ENCODE measurements at regions of chr4 and their contacts with region 1.

Region 1: GRCh38 chr4:40629401-40630334 is at the start of gene RBM47:
- DNase-seq: peak; percentile 29
- ATAC-seq: peak; percentile 65
- H3K4me3 Mint-ChIP-seq: peak within 1 kb of the TSS; percentile 93
- H3K27ac Mint-ChIP-seq: peak within 1 kb of the TSS; percentile 84
- H3K4me1 Mint-ChIP-seq: peaks cover 22% of the 10 kb centered on the region
- H3K27me3 Mint-ChIP-seq: peaks cover 5% of the 10 kb centered on the region
- CTCF ChIP-seq: no peak
- total RNA-seq, gene RBM47: 6.3 and 8.0 TPM in 2 replicates

Region 2: DNA sequence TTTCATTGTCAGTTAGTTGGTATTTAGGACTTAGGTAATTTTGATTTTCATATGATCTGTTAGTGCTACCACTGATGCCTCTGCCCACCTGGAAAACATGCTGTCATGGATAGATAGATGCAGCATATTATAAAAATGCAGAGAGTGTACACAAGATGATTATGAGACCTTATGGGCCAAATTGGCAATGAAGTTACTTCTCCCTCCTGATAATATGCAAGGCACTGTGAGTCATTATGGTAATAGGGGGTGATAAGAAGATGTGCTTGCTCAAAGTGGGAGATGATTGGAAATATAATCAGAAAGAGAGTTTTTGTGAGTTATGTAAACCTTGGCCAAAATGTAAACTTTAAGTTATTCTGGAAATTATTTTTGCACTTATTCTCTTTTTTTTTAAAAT is 489.5 kb before region 1 on chr4:
- CTCF ChIA-PET with region 1: no interaction called
- POLR2A ChIA-PET with region 1: no interaction called
- intact Hi-C with region 1: no loop called
- DNase-seq: no peak
- ATAC-seq: no peak
- H3K4me3 Mint-ChIP-seq: no peak overlapping the region
- H3K27ac Mint-ChIP-seq: no peak overlapping the region
- H3K4me1 Mint-ChIP-seq: no peaks in the 10 kb centered on the region
- H3K27me3 Mint-ChIP-seq: no peaks in the 10 kb centered on the region
- CTCF ChIP-seq: no peak

Region 3: GRCh38 chr4:40462326-40462725 is 167.3 kb before region 1 on chr4:
- CTCF ChIA-PET with region 1: no interaction called
- POLR2A ChIA-PET with region 1: no interaction called
- intact Hi-C with region 1: loop called (anchors 5 kb)
- DNase-seq: no peak
- ATAC-seq: peak; percentile 95
- H3K4me3 Mint-ChIP-seq: no peak overlapping the region
- H3K27ac Mint-ChIP-seq: peak overlapping the region; percentile 72
- H3K4me1 Mint-ChIP-seq: peaks cover 17% of the 10 kb centered on the region
- H3K27me3 Mint-ChIP-seq: no peaks in the 10 kb centered on the region
- CTCF ChIP-seq: no peak

Region 4: GRCh38 chr4:40502934-40503333 is 126.7 kb before region 1 on chr4:
- CTCF ChIA-PET with region 1: no interaction called
- POLR2A ChIA-PET with region 1: no interaction called
- intact Hi-C with region 1: no loop called
- DNase-seq: no peak
- ATAC-seq: no peak
- H3K4me3 Mint-ChIP-seq: no peak overlapping the region
- H3K27ac Mint-ChIP-seq: no peak overlapping the region
- H3K4me1 Mint-ChIP-seq: peaks cover 11% of the 10 kb centered on the region
- H3K27me3 Mint-ChIP-seq: no peaks in the 10 kb centered on the region
- CTCF ChIP-seq: no peak

Region 5: DNA sequence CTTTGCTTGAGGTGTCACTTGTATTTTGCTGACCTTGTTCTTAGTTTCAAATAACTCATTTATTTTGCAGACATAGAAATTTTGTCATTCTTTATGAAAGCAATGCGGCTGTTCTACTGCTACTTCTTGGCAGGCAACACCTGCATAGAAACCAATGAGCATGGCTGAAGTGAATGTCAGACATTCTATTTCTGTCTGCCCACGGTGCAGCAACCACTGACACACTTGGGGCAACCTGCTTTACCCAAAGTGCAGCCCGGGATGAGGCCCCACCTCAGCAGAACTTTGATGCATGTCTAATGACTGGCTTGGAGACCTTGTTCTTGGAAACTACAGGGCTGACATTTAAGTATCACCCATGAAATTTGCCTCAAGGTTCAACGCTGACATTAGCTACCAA is 93.6 kb before region 1 on chr4:
- CTCF ChIA-PET with region 1: no interaction called
- POLR2A ChIA-PET with region 1: interaction called, 3 read pairs
- intact Hi-C with region 1: loop called (anchors 5 kb)
- DNase-seq: no peak
- ATAC-seq: peak; percentile 74
- H3K4me3 Mint-ChIP-seq: peak overlapping the region; percentile 46
- H3K27ac Mint-ChIP-seq: peak overlapping the region; percentile 76
- H3K4me1 Mint-ChIP-seq: peaks cover 17% of the 10 kb centered on the region
- H3K27me3 Mint-ChIP-seq: no peaks in the 10 kb centered on the region
- CTCF ChIP-seq: no peak

Region 6: DNA sequence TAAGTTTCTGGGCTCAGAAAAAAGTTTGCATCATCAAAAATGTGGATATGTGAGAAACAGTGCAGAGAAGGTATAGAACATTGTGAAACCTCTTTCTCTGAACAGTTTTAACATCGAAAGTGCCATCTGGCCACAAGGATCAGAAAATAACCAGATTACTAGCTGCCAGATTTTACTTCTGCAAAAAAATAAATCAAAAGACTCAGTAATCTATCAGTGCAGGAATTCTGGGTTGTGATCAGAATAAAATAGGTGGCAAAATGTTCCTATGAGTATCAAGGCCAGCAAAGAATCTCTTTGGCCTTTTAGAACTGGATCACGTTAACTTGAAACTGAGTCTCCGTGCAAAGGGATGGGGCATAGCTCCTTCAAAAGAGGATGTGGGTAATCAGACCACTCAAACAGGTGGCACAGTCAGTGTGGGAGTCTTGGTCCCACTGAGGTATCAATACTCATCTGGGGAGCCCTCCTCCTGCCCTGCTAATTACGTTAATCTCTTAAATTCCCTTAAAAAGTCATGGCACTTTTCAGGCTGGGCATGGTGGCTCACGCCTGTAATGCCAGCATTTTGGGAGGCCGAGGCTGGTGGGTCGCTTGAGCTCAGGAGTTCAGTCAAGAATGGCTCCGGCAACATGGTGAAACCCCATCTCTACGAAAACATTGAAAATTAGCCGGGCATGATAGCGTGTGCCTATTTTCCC is 26.7 kb after region 1 on chr4:
- CTCF ChIA-PET with region 1: no interaction called
- POLR2A ChIA-PET with region 1: interaction called, 16 read pairs
- intact Hi-C with region 1: loop called (anchors 2 kb)
- DNase-seq: peak; percentile 16
- ATAC-seq: peak; percentile 91
- H3K4me3 Mint-ChIP-seq: peak overlapping the region; percentile 48
- H3K27ac Mint-ChIP-seq: peak overlapping the region; percentile 37
- H3K4me1 Mint-ChIP-seq: peaks cover 16% of the 10 kb centered on the region
- H3K27me3 Mint-ChIP-seq: no peaks in the 10 kb centered on the region
- CTCF ChIP-seq: no peak

Measured in activated B cell treated with CpG ODN at 0.5 μM for 24 hours (primary cell).